Right lobe of liver (tissue), 6 donors: ENCODE measurements at regions of chrX and their contacts with region 1.

Region 1: GRCh38 chrX:31652650-31653049 is 580.8 kb upstream of the FTHL17 start:
- DNase-seq: no peak
- ATAC-seq: peak in 2 of 4 donors; percentile 53 to 62
- H3K4me3 ChIP-seq: no peak overlapping the region
- H3K27ac ChIP-seq: no peak overlapping the region
- H3K4me1 ChIP-seq: no peaks in the 10 kb centered on the region
- H3K27me3 ChIP-seq: no peaks in the 10 kb centered on the region
- CTCF ChIP-seq: no peak
- POLR2A ChIP-seq: no peak

Region 2: GRCh38 chrX:31213941-31214340 is 438.7 kb before region 1 on chrX:
- intact Hi-C with region 1: loop called in 1 of 2 experiments (anchors 5 kb)
- DNase-seq: no peak
- ATAC-seq: peak; percentile 62 to 71 (median 63)
- H3K4me3 ChIP-seq: no peak overlapping the region
- H3K27ac ChIP-seq: no peak overlapping the region
- H3K4me1 ChIP-seq: no peaks in the 10 kb centered on the region
- H3K27me3 ChIP-seq: no peaks in the 10 kb centered on the region
- CTCF ChIP-seq: peak; percentile 33 to 55 (median 52)
- POLR2A ChIP-seq: no peak

Region 3: GRCh38 chrX:32195611-32196010 is 543.0 kb after region 1 on chrX:
- intact Hi-C with region 1: no loop called
- DNase-seq: no peak
- ATAC-seq: no peak
- H3K4me3 ChIP-seq: no peak overlapping the region
- H3K27ac ChIP-seq: no peak overlapping the region
- H3K4me1 ChIP-seq: no peaks in the 10 kb centered on the region
- H3K27me3 ChIP-seq: peaks cover 0 to 3% of the 10 kb centered on the region in 2 donors
- CTCF ChIP-seq: no peak
- POLR2A ChIP-seq: no peak